Activated naive CD8-positive, alpha-beta T cell treated with anti-CD3 and anti-CD28 coated beads, Interleukin-2, amount 10 ng/mL, durations not matched to agents 7 days and 5 days (primary cell): ENCODE measurements at regions of chr3 and their contacts with region 1.

Region 1: DNA sequence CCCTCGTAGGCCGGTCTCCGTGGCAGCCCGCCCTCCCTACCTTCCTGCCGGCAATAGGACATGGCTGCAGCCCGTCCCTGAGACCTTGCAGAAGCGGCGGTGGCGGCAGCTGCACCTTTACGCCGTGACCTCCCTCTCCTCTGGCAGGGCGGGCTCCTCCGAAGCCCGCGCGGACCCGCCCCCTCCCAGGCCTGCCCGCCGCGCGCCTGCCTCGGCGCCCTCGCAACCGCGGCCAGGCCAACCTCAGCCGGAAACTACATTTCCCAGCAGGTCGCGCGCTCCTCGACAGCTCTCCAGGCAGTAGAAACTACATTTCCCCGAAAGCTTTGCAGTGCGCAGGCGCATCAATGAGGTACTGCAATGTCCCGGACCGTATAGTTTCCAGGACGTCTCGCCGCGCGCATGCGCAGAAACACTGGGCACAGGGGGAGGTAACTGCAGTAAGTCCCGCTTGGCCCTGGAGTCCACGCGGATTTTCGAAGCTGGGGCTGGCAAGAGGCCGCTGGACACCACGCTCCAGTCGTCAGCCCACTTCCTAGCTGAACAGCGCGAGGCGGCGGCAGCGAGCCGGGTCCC is at the starts of genes CHCHD4 and TMEM43:
- DNase-seq: peak; percentile 96
- ATAC-seq: peak; percentile 92
- H3K4me3 Mint-ChIP-seq: peak within 1 kb of the TSS; percentile 95
- H3K27ac Mint-ChIP-seq: peak within 1 kb of the TSS; percentile 92
- H3K4me1 Mint-ChIP-seq: peaks cover 52% of the 10 kb centered on the region
- H3K27me3 Mint-ChIP-seq: no peaks in the 10 kb centered on the region
- total RNA-seq, gene CHCHD4: 10.1 to 11.9 TPM
- total RNA-seq, gene TMEM43: 44.4 to 47.0 TPM

Region 2: GRCh38 chr3:14144423-14145075 is 19.8 kb after region 1 on chr3:
- POLR2A ChIA-PET with region 1: interaction called, 24 read pairs
- DNase-seq: peak; percentile 46
- ATAC-seq: peak; percentile 89
- H3K4me3 Mint-ChIP-seq: peak overlapping the region; percentile 61
- H3K27ac Mint-ChIP-seq: peak overlapping the region; percentile 77
- H3K4me1 Mint-ChIP-seq: peaks cover 17% of the 10 kb centered on the region
- H3K27me3 Mint-ChIP-seq: no peaks in the 10 kb centered on the region